HepG2 (cell line): ENCODE measurements at regions of chr17 and their contacts with region 1.

Region 1: GRCh38 chr17:75309025-75309772 is 20.0 kb upstream of the SLC25A19 start:
- DNase-seq: peak; percentile 94
- ATAC-seq: peak; percentile 87
- H3K4me3 ChIP-seq: peak overlapping the region; percentile 35 to 69 (median 48); a peak in 5 of 6 replicates
- H3K27ac ChIP-seq: peak overlapping the region; percentile 89
- H3K4me1 ChIP-seq: peaks cover 66% of the 10 kb centered on the region
- H3K27me3 ChIP-seq: no peaks in the 10 kb centered on the region
- CTCF ChIP-seq: no peak; the same call in 1 of the 2 replicates
- EP300 ChIP-seq: peak; percentile 53 to 67; a peak in 2 of 4 replicates
- POLR2A ChIP-seq: peak; percentile 93
- RAD21 ChIP-seq: peak; percentile 70

Region 2: DNA sequence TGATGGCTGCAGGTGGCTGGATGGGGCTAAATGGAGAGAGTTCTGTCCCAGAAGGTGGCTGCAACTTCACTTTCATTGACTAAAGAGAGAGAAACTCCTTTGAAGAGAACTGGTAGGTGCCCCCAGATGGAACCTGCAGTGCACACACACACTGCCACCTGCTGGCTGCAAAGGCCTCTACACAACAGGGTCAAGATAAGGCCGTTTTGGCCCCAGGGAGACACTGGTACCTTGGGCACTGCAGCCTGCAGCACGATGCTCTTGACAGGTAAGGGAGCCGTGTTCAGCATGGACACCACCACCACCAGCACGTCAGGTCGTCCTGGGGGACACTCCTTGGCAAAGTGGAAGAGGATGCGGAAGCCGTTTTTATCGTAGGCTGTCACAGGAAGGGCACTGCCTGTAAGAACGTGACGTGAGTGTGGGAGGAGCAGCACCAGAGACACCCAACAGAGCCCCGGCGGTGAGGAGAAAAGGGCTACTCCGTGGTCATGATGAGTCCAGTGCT is 70.5 kb before region 1 on chr17:
- CTCF ChIA-PET with region 1: no interaction called
- POLR2A ChIA-PET with region 1: no interaction called
- in situ Hi-C with region 1: no loop called
- intact Hi-C with region 1: no loop called
- DNase-seq: peak; percentile 74
- ATAC-seq: peak; percentile 83
- H3K4me3 ChIP-seq: no peak overlapping the region
- H3K27ac ChIP-seq: no peak overlapping the region
- H3K4me1 ChIP-seq: no peaks in the 10 kb centered on the region
- H3K27me3 ChIP-seq: no peaks in the 10 kb centered on the region
- CTCF ChIP-seq: peak; percentile 97
- EP300 ChIP-seq: no peak
- POLR2A ChIP-seq: no peak; a peak in 2 of 4 replicates
- RAD21 ChIP-seq: peak; percentile 54

Region 3: DNA sequence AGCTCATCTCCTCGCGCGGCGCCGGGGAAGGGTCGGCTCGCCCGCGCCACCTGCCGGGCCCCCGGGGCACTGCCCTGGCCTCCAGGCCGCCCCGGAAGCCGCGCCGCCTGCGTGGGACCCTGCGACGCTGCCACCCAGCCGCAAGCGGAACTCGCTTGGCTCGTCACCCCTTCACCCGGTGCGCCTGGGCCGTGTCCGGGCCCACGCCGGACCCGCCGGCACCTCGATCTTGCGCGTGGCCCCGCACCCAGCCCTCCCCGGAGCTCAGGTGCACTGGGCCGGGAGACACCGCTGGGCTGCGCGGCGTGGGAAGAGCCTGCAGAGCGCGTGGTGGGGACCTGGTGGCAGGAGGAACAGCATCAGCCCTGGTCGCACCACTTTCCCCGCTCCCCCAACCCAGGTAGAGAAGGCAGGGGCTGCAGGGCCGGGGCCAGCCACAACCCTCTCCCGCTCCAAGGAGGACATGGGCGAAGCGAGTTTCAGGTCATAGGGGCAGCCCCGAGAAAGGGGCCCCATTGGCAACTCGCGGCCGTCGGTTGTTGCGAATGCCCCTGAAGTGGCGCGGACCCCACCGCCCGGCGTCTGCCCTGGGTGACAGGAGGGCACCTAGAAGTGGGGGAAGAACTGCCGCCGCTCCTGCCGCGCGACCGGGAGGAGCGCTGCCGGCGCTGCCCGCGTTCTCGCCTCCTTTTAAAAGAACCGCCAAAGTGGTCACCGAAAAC is 37.8 kb before region 1 on chr17:
- CTCF ChIA-PET with region 1: no interaction called
- POLR2A ChIA-PET with region 1: interaction called, 20 read pairs
- in situ Hi-C with region 1: no loop called
- intact Hi-C with region 1: loop called (anchors 1 kb)
- DNase-seq: peak; percentile 58
- ATAC-seq: peak; percentile 36
- H3K4me3 ChIP-seq: peak overlapping the region; percentile 91 to 98 (median 94)
- H3K27ac ChIP-seq: peak overlapping the region; percentile 77
- H3K4me1 ChIP-seq: peaks cover 43% of the 10 kb centered on the region
- H3K27me3 ChIP-seq: no peaks in the 10 kb centered on the region
- CTCF ChIP-seq: peak; percentile 70
- EP300 ChIP-seq: no peak
- POLR2A ChIP-seq: peak in 1 of 2 experiments; percentile 71; a peak in 2 of 4 replicates
- RAD21 ChIP-seq: peak; percentile 87

Region 4: DNA sequence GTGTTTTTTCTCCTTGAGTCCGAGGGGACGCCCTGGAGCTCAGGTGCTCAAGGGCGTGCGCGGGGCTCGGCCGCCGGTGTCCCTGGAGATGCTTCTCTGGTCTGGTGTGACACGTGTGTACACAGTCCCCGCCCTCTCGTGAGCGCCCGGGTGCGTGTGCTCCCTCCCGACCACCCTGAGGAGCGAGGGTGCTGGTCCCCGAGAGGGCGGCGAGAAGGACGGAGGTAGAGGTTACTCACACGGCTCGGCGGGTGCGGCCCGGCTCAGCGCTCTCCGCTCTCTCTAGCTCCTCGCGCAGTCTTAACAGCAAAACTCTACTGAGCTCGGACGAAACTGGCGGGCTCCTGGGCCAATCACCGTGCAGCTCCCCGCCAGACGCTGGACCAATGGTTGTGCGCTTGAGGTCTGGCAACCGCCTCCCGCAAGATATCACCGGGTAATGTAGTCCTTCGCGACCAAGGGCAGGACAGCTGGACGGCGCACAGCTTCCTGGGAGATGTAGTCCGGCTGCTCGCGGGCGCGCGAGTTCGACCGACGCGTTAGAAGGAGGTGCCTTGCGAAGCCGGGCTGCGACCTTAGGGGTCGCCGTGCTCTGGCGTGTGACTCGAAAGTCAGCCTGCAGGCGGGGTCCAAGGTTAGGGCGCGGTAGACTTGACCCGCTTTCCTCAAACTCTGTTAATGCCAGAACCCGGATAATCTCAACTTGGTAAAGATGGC is 19.9 kb before region 1 on chr17 and contains the start of gene SLC25A19:
- CTCF ChIA-PET with region 1: no interaction called
- POLR2A ChIA-PET with region 1: interaction called, 39 read pairs
- in situ Hi-C with region 1: no loop called
- intact Hi-C with region 1: no loop called
- DNase-seq: peak; percentile 99
- ATAC-seq: peak; percentile 97
- H3K4me3 ChIP-seq: peak within 1 kb of the TSS; percentile 74 to 94 (median 87)
- H3K27ac ChIP-seq: peak within 1 kb of the TSS; percentile 75
- H3K4me1 ChIP-seq: peaks cover 57% of the 10 kb centered on the region
- H3K27me3 ChIP-seq: no peaks in the 10 kb centered on the region
- CTCF ChIP-seq: peak; percentile 93
- EP300 ChIP-seq: no peak
- POLR2A ChIP-seq: peak; percentile 94 to 99
- RAD21 ChIP-seq: peak; percentile 77
- total RNA-seq, gene SLC25A19: 41.4 and 42.2 TPM in 2 replicates

Region 5: DNA sequence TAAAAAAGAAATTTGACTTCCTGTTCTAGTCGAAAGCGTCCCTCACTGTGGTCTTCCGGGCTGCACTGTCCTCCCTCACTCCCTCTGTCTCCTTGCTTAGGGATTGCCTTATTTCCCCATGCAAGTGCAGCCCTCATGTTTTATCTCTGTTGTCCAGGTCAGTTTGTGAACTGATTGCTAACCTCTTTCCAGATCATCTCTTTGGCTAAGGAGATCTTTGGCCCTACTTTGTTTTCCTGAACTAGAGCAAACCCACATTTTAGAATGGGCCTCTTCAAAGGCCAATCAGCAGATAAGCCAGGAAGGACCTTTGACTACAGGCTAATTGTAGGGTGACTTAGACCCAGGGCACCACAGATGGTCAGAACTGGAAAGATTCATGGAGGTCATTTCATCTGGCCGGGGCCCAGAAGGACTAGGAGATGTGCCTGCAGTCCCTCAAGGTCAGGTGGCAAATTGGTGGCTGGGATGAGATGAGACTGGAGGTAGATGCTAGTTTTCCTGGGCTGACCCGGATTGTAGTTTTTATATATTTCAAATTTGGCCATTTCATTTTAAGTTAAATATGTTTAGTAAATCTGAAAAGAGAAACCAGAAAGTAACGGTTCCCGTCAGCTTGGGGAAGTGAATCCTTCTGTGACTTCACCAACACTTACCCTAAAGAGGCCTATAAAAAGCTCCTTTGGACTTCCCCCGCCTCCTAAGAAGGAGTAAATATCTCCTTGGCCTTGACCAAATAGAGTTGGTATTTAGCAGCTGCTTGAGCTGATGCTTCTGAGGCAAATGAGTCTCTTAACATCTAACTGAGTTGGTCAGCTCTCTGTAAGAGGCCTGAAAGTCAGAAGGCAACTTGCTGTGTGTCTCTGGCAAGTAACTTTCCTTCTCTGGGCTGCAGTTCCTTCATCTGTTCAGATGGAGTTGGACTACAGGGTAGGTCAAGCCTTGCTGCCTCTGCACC is 13.7 kb before region 1 on chr17:
- CTCF ChIA-PET with region 1: no interaction called
- POLR2A ChIA-PET with region 1: interaction called, 33 read pairs
- in situ Hi-C with region 1: no loop called
- intact Hi-C with region 1: loop called (anchors 1 kb)
- DNase-seq: peak; percentile 98
- ATAC-seq: peak; percentile 93
- H3K4me3 ChIP-seq: peak overlapping the region; percentile 43 to 58 (median 46)
- H3K27ac ChIP-seq: peak overlapping the region; percentile 85
- H3K4me1 ChIP-seq: peaks cover 60% of the 10 kb centered on the region
- H3K27me3 ChIP-seq: no peaks in the 10 kb centered on the region
- CTCF ChIP-seq: peak; percentile 35
- EP300 ChIP-seq: peak in 1 of 2 experiments; percentile 95; a peak in 2 of 4 replicates
- POLR2A ChIP-seq: peak; percentile 69 to 73; a peak in 3 of 4 replicates
- RAD21 ChIP-seq: peak; percentile 51; the same call in 1 of the 2 replicates

Region 6: DNA sequence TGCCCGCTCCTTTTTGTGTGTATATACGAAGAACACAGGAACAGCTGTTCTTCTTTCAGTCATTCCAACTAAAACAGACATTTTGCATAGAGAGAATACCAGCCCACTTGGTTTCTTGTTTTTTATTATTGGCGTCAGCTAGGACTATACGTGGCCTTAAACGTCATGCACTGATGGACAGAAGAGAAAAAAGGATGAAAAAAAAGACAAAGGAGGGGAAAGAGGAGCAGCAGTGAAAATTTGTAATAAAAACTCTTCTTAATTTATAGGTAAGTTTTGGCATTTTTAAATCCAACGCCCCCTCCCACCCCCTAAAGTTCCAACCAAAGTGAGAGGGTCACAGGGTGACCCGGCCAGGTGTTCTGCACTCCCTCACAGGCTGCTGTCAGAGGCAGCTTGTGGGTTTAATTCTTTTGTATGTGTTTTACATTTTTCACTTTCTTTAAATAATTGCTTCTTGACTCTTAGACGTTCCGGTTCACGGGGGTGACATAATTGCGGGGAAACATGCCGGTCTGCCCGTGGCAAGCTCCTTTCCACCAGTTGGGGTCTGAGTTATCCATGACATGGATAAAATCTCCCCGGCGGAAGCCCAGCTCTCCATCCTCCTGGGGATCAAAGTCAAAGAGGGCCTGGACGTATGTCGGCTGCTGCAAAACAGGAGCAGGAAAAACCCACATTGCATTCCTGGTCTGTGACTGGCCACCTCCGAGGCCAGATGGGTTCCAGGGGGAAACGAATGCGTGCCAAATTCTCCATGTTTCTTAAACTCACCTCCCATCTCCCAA is 10.9 kb after region 1 on chr17:
- CTCF ChIA-PET with region 1: interaction called, 3 read pairs
- POLR2A ChIA-PET with region 1: interaction called, 14 read pairs
- in situ Hi-C with region 1: no loop called
- intact Hi-C with region 1: no loop called
- DNase-seq: no peak
- ATAC-seq: no peak
- H3K4me3 ChIP-seq: no peak overlapping the region
- H3K27ac ChIP-seq: no peak overlapping the region
- H3K4me1 ChIP-seq: no peaks in the 10 kb centered on the region
- H3K27me3 ChIP-seq: no peaks in the 10 kb centered on the region
- CTCF ChIP-seq: no peak
- EP300 ChIP-seq: no peak
- POLR2A ChIP-seq: no peak
- RAD21 ChIP-seq: no peak

Region 7: DNA sequence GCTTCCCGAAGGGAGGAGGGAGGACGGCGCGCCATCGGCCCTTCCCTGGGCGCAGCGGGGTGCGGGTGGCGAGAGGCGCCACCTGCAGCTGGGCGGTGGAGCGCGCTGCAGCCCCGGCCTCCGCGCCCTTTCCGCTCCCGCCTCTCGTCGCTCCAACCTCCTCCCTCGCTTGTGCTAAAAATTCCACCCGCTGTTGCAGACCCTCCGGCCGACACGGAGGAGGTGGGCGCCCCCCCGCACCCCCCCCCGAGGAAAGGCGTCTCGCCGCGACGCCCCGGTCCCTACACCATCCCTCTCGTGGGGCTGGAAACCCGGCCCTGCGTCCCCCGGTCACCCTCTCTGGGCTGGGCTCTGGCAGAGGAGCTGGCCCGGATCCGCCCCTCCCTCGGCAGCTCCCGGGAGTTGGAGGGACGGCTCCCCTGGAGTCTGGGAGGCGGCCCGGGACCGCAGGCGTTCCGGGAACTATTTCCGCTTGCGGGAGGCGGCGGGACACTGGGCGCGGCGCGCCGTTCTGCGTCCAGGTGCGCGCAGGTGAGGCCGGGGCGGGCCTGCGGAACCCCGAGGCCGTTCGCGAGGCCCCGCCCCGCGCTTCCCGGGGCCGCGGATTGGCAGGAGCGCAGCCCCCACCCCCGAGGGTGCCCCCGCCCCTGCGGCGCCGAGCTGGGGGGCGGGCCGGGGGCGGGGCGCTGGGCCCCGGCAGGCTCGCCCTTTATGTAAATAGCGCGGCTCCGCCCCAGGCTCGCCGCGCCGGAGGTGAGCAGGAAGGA is 215.9 kb after region 1 on chr17 and contains the start of gene LLGL2:
- CTCF ChIA-PET with region 1: no interaction called
- POLR2A ChIA-PET with region 1: no interaction called
- in situ Hi-C with region 1: no loop called
- intact Hi-C with region 1: no loop called
- DNase-seq: peak; percentile 83
- ATAC-seq: peak; percentile 81
- H3K4me3 ChIP-seq: peak within 1 kb of the TSS; percentile 85 to 95 (median 86)
- H3K27ac ChIP-seq: peak within 1 kb of the TSS; percentile 72
- H3K4me1 ChIP-seq: peaks cover 21% of the 10 kb centered on the region
- H3K27me3 ChIP-seq: no peaks in the 10 kb centered on the region
- CTCF ChIP-seq: peak; percentile 88
- EP300 ChIP-seq: peak in 1 of 2 experiments; percentile 32; a peak in 2 of 4 replicates
- POLR2A ChIP-seq: peak in 1 of 2 experiments; percentile 64; a peak in 2 of 4 replicates
- RAD21 ChIP-seq: peak; percentile 87
- total RNA-seq, gene LLGL2: 53.9 and 86.7 TPM in 2 replicates